A549 (cell line): ENCODE measurements at regions of chr17 and their contacts with region 1.

Region 1: GRCh38 chr17:700504-701094 is 14.0 kb downstream of the VPS53 start:
- DNase-seq: peak; percentile 35 to 73
- ATAC-seq: peak in 1 of 2 experiments; percentile 71; a peak in 2 of 6 replicates
- H3K4me3 ChIP-seq: no peak overlapping the region
- H3K27ac ChIP-seq: peak overlapping the region in 1 of 2 experiments; percentile 16; a peak in 1 of 6 replicates
- H3K4me1 ChIP-seq: peaks cover 8% of the 10 kb centered on the region
- CTCF ChIP-seq: peak; percentile 94
- EP300 ChIP-seq: no peak
- POLR2A ChIP-seq: no peak
- RAD21 ChIP-seq: peak; percentile 91 to 95

Region 2: GRCh38 chr17:409848-410545 is 290.6 kb before region 1 on chr17:
- CTCF ChIA-PET with region 1: interaction called, 410 read pairs
- POLR2A ChIA-PET with region 1: interaction called, 7 read pairs
- DNase-seq: peak; percentile 100
- ATAC-seq: peak; percentile 81 to 93
- H3K4me3 ChIP-seq: peak overlapping the region; percentile 70
- H3K27ac ChIP-seq: peak overlapping the region; percentile 76 to 90
- H3K4me1 ChIP-seq: peaks cover 21% of the 10 kb centered on the region
- CTCF ChIP-seq: no peak
- EP300 ChIP-seq: no peak
- POLR2A ChIP-seq: peak; percentile 95
- RAD21 ChIP-seq: no peak

Region 3: DNA sequence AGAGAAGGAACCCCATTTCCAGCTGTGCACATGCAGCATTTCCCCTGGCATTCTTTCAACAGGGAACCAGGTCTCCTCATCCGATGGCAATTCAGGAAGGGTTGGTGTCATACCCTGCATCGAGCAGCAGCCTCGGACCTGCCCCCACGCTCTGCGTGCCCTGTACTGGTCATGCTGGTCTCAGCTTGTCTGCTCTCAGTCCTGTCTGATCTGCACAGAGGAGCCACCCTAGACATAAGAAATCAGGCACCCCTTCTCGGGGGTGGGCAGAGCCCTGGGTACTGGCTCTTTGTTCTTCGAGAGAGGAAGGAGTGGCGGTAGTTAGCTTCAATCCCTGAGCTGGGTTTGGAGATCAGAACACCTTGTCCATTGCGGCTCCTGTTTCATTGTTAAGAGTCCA is 186.0 kb before region 1 on chr17:
- CTCF ChIA-PET with region 1: interaction called, 10 read pairs
- POLR2A ChIA-PET with region 1: no interaction called
- DNase-seq: no peak
- ATAC-seq: peak in 1 of 2 experiments; percentile 27; a peak in 1 of 6 replicates
- H3K4me3 ChIP-seq: no peak overlapping the region
- H3K27ac ChIP-seq: no peak overlapping the region
- H3K4me1 ChIP-seq: no peaks in the 10 kb centered on the region
- CTCF ChIP-seq: no peak
- EP300 ChIP-seq: no peak
- POLR2A ChIP-seq: no peak
- RAD21 ChIP-seq: no peak

Region 4: DNA sequence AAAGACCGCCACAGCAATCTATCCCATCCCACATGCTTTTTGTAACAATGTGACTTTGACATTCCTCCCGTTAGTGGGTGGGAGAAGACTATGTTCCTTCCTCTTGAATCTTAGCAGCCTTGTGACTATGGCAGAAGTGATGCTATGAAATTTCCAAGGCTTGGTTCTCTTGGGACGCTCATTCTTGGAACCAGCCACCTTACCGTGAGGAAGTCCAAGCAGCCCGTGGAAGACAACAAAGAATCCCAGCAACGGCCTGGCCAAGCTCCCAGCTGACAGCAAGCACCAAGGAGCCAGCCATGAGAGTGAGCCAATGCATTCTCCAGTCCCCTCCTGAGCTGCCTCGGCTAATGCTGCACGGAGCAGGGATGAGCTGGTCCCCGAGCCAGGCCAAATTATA is 48.3 kb before region 1 on chr17:
- CTCF ChIA-PET with region 1: interaction called, 31 read pairs
- POLR2A ChIA-PET with region 1: no interaction called
- DNase-seq: no peak
- ATAC-seq: no peak
- H3K4me3 ChIP-seq: no peak overlapping the region
- H3K27ac ChIP-seq: no peak overlapping the region
- H3K4me1 ChIP-seq: no peaks in the 10 kb centered on the region
- CTCF ChIP-seq: no peak
- EP300 ChIP-seq: no peak
- POLR2A ChIP-seq: no peak
- RAD21 ChIP-seq: no peak

Region 5: DNA sequence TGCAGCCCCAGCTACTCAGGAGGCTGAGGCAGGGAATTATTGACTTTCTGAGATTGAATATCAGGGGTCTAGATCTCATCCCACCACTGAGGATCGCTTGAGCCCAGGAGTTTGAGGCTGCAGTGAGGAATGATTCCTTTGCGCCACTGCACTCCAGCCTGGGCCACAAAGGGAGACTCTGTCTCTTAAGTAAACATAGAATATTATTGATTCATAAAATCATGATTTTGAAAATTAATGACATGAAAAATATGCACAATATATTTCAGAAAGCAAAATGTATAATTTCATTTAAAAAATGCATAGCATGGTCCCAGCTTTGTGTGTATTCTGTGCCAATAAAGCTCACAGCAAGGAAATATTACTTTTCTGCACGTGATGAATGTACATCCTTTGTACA is 15.6 kb after region 1 on chr17:
- CTCF ChIA-PET with region 1: interaction called, 147 read pairs
- POLR2A ChIA-PET with region 1: interaction called, 6 read pairs
- DNase-seq: no peak
- ATAC-seq: no peak
- H3K4me3 ChIP-seq: peak overlapping the region; percentile 70
- H3K27ac ChIP-seq: peak overlapping the region; percentile 79 to 91
- H3K4me1 ChIP-seq: peaks cover 25% of the 10 kb centered on the region
- CTCF ChIP-seq: no peak
- EP300 ChIP-seq: no peak
- POLR2A ChIP-seq: no peak
- RAD21 ChIP-seq: no peak

Region 6: DNA sequence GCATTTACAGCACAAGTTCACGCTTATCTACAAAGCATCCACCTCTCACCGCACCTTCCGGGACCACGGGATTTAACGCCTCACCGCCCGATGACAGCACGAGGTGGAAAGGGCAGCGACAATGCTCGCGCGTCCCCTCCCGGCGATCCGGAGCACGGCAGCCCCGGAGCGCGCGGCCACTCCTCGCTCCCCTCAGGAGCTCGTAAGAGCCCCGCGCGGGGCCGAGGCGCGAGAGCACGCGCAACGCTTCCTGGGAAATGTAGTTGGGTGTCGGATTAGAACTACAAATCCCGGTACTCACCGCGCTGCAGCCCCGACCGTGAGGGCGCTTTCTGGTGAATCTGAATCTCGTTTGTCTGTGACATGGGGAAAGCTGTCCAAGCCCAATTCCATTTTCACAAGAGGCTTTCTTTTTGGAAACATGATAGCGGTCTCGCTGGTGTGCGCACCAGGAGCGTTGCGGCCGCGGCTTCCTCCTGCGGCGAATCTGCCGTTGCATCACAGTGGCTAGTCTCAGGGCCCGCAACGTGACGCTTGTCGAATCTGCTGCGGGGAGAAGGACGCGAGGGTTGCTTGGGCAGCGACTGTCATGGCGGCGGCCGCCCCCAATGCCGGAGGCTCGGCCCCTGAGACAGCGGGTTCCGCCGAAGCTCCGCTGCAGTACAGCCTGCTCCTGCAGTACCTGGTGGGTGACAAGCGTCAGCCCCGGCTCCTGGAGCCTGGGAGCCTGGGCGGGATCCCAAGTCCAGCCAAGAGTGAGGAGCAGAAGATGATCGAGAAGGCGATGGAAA is 296.1 kb after region 1 on chr17 and contains the start of gene TIMM22:
- CTCF ChIA-PET with region 1: interaction called, 14 read pairs
- POLR2A ChIA-PET with region 1: no interaction called
- DNase-seq: peak; percentile 98 to 100
- ATAC-seq: peak; percentile 97 to 98
- H3K4me3 ChIP-seq: peak within 1 kb of the TSS; percentile 88
- H3K27ac ChIP-seq: peak within 1 kb of the TSS; percentile 84 to 93
- H3K4me1 ChIP-seq: peaks cover 24% of the 10 kb centered on the region
- CTCF ChIP-seq: peak; percentile 97
- EP300 ChIP-seq: no peak
- POLR2A ChIP-seq: peak; percentile 92
- RAD21 ChIP-seq: peak; percentile 95 to 97
- polyA plus RNA-seq, gene TIMM22: 14.7 and 15.8 TPM in 2 replicates